Activated B cell treated with CpG ODN at 0.5 μM for 24 hours (primary cell): ENCODE measurements at regions of chr2 and their contacts with region 1.

Region 1: DNA sequence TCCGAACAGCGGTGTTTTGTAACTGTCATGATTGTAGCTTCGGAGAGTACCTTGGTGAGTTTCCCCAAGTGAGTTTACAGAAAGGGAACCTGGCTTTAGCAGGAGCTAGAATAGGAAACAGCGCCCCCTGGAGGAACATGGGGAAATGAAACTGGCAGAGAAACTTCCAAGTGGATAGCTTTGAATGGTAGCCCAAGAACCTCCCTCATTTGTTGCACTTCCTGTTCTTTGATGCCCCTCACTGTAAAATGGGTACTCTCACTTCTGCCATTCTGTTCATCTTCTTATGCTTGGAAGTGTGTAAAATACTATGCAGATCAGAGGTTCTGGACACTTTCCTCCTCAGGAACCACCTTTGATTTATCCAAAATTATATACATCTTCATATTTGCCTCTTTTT is 36.2 kb downstream of the CHST10 start:
- DNase-seq: peak; percentile 71
- ATAC-seq: peak; percentile 97
- H3K4me3 Mint-ChIP-seq: no peak overlapping the region
- H3K27ac Mint-ChIP-seq: peak overlapping the region; percentile 31
- H3K4me1 Mint-ChIP-seq: peaks cover 8% of the 10 kb centered on the region
- H3K27me3 Mint-ChIP-seq: no peaks in the 10 kb centered on the region
- CTCF ChIP-seq: no peak

Region 2: GRCh38 chr2:100178051-100178788 is 203.0 kb before region 1 on chr2:
- CTCF ChIA-PET with region 1: no interaction called
- POLR2A ChIA-PET with region 1: no interaction called
- intact Hi-C with region 1: no loop called
- DNase-seq: no peak
- ATAC-seq: peak; percentile 84
- H3K4me3 Mint-ChIP-seq: no peak overlapping the region
- H3K27ac Mint-ChIP-seq: peak overlapping the region; percentile 24
- H3K4me1 Mint-ChIP-seq: peaks cover 17% of the 10 kb centered on the region
- H3K27me3 Mint-ChIP-seq: no peaks in the 10 kb centered on the region
- CTCF ChIP-seq: no peak

Region 3: GRCh38 chr2:100401268-100401667 is 20.0 kb after region 1 on chr2:
- CTCF ChIA-PET with region 1: no interaction called
- POLR2A ChIA-PET with region 1: no interaction called
- intact Hi-C with region 1: no loop called
- DNase-seq: no peak
- ATAC-seq: no peak
- H3K4me3 Mint-ChIP-seq: no peak overlapping the region
- H3K27ac Mint-ChIP-seq: no peak overlapping the region
- H3K4me1 Mint-ChIP-seq: peaks cover 13% of the 10 kb centered on the region
- H3K27me3 Mint-ChIP-seq: no peaks in the 10 kb centered on the region
- CTCF ChIP-seq: no peak

Region 4: DNA sequence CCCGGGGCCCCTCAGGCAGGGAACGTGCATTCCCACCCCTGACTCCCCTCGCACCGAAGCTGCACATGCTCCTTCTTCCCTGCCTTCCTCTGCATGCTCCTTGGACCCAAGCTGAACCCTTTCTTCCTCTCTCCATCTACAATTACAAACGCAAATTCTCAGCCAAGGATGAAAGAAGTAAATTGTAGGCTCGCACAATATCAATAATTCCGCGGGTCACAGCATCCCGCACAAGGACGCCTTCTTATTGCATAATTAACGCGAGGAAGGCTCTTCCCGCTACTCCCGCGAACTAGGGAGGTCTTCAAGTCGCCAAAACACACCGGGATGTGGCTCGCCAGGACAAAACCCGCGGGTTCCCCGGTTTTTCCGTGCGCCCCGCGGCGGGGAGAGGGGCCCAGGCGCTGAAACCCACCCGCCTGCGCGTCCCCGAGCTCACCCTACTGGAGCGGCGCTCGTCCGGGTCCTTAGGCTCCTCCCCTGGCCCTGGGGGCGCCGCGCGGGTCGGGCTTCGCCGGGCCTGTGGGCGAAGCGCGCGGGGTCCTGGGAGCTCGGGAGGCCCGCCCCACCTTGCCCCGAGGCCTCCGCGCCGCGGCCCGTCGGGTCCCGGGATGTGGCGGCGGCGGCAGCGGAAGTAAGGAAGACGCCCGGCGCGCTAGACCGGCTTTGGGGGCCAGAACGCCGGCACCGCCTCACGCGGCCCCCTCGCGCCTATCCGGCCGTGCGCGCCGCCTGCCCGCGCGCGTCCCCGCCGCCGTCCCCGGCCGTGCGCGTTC is 35.9 kb after region 1 on chr2 and contains the start of gene CHST10:
- CTCF ChIA-PET with region 1: interaction called, 3 read pairs
- POLR2A ChIA-PET with region 1: no interaction called
- intact Hi-C with region 1: loop called (anchors 5 kb)
- DNase-seq: peak; percentile 74
- ATAC-seq: peak; percentile 96
- H3K4me3 Mint-ChIP-seq: peak within 1 kb of the TSS; percentile 94
- H3K27ac Mint-ChIP-seq: peak within 1 kb of the TSS; percentile 80
- H3K4me1 Mint-ChIP-seq: peaks cover 18% of the 10 kb centered on the region
- H3K27me3 Mint-ChIP-seq: no peaks in the 10 kb centered on the region
- CTCF ChIP-seq: no peak
- total RNA-seq, gene CHST10: 19.8 and 21.0 TPM in 2 replicates

Region 5: DNA sequence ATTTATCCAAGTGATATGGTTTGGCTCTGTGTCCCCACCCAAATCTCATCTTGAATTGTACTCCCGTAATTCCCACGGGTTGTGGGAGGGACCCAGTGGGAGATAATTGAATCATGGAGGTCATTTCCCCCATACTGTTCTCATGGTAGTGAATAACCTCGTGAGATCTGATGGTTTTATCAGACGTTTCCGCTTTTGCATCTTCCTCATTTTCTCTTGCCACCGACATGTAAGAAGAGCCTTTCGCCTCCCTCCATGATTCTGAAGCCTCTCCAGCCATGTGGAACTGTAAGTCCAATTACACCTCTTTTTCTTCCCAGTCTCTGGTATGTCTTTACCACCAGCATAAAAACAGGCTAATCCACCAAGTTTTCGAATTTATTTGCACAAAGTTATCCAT is 56.5 kb after region 1 on chr2:
- CTCF ChIA-PET with region 1: no interaction called
- POLR2A ChIA-PET with region 1: no interaction called
- intact Hi-C with region 1: no loop called
- DNase-seq: no peak
- ATAC-seq: no peak
- H3K4me3 Mint-ChIP-seq: no peak overlapping the region
- H3K27ac Mint-ChIP-seq: no peak overlapping the region
- H3K4me1 Mint-ChIP-seq: no peaks in the 10 kb centered on the region
- H3K27me3 Mint-ChIP-seq: peaks cover 20% of the 10 kb centered on the region
- CTCF ChIP-seq: no peak